ENCODE measurements at regions of chr9 and their contacts with region 1.

Region 1: GRCh38 chr9:129487642-129488409 is 133.1 kb downstream of the C9orf50 start:
- DNase-seq: peak; percentile 75
- H3K4me3 Mint-ChIP-seq: peak overlapping the region; percentile 93
- H3K27ac Mint-ChIP-seq: peak overlapping the region; percentile 100
- H3K4me1 Mint-ChIP-seq: peaks cover 62% of the 10 kb centered on the region
- H3K27me3 Mint-ChIP-seq: no peaks in the 10 kb centered on the region

Region 2: GRCh38 chr9:129237195-129237611 is 250.6 kb before region 1 on chr9:
- CTCF ChIA-PET with region 1: no interaction called
- intact Hi-C with region 1: loop called (anchors 5 kb)
- DNase-seq: peak; percentile 83
- H3K4me3 Mint-ChIP-seq: peak overlapping the region; percentile 82
- H3K27ac Mint-ChIP-seq: peak overlapping the region; percentile 95
- H3K4me1 Mint-ChIP-seq: peaks cover 53% of the 10 kb centered on the region
- H3K27me3 Mint-ChIP-seq: no peaks in the 10 kb centered on the region

Region 3: DNA sequence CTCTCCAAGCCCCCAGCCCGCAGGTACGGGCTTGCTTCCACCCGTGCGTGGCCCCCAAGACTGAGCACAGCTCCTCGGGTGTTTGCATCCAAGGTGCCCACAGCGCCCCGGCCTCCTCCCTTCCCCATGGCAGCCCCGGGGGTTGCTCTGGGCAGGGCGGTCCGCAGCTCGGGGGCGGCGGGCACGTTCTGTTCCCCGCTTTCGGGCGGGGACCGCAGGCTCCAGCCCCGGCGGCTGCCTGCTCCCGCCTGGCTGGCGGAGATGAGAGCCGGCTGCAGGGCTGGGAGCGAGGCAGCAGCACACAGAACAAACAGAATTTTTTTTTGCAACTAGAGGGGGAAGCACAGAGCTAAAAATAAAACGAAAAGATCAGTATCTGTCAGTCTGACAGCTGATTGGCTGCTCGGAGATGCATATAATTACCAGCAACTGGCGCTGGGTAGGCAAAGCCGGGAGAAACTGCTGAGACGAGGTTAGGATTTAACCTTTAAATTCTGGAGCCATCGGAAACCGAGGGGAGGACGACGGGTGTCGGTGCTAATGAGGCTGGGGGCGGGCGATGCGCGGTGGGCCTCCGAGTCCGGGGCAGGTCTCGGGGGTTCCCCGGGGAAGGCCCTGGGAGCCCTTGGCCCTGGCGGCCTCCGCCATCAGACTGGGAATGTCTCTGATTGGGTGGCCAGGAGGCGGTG is 167.1 kb before region 1 on chr9:
- CTCF ChIA-PET with region 1: no interaction called
- intact Hi-C with region 1: loop called (anchors 5 kb)
- DNase-seq: peak; percentile 77
- H3K4me3 Mint-ChIP-seq: peak overlapping the region; percentile 68
- H3K27ac Mint-ChIP-seq: peak overlapping the region; percentile 67
- H3K4me1 Mint-ChIP-seq: peaks cover 18% of the 10 kb centered on the region
- H3K27me3 Mint-ChIP-seq: no peaks in the 10 kb centered on the region

Region 4: DNA sequence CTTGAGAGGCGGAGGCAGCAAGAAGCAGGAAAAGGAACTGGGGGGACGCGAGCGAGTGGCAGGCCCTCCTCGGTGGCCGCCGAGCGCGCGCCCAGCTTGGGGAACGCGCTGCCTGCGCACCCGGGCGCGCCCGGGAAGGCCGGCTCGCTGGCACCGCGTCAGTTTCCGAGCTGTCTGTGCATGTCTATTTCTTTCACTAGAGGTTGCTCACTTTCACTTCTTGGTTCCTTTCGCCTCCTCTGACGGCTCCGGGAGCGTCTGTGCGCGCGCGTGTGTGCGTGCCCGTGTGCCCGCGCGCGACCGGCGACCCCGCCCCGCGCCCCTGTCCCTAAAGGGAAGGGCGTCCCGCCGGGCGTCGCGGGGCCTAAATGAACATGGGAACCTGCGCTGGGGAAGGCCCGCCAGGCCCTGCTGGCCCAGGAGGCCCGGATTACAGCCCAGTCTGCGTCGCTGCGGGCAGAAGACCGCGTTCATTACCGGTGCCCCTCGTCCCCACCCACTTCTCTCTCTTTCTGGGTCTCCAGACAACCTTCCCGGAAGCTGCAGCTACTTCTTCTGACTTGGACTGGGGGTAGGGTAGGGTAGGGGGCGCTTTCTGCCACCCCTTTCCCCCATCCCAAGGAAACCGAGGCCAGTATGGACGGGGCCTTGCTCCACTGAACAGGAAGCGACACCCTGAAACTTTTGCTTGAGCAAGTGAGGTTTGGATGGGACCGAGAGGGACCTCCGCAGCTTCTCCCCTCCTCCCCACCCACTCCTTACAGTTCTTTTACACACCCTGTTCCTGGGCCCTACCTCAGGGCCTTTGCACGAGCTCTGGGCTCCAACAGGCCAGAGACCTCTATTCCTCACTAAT is 104.0 kb before region 1 on chr9:
- CTCF ChIA-PET with region 1: no interaction called
- intact Hi-C with region 1: loop called (anchors 2 kb)
- DNase-seq: peak; percentile 80
- H3K4me3 Mint-ChIP-seq: peak overlapping the region; percentile 69
- H3K27ac Mint-ChIP-seq: peak overlapping the region; percentile 66
- H3K4me1 Mint-ChIP-seq: peaks cover 10% of the 10 kb centered on the region
- H3K27me3 Mint-ChIP-seq: no peaks in the 10 kb centered on the region

Region 5: DNA sequence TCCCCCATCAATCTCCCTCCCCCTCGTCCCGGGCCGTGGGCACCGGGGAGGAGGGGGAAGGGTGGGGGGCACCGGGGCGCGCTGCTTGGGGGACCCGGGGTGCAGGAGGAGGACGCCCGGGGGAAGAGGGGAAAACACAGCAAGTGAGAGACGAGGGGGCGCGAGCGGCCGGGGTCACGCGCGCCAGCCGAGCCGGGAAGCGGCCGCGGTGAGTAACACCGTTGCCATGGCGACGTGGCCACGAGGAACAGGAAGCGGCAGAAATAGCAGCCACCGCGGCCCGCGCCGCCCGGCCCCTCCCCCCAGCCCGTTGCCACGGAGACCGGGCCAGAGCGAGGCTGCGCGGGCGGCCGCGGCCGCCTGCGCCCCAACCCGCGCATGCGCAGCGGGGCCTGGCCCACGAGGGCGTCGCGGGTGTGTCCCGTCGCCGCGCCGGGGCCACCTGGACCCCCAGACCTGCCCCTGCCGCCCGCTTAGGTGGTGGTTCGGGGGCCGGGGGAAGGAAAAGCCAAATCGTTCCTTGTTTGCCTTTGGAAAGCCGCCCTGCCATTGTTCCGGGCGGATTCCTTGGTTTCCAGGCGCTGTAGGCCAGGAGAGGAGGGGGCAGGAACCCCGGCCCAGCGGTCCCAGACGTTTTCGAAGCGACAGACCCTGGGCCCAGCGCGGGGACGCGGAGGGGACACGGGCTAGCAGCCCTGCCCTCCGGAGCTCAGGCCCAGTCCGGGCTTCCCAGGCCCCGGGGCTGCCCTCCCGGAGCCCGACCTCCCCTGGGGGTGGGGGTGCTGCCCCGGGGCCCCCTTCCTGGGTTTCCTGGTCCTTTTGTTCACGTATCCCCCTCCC is 74.1 kb before region 1 on chr9:
- CTCF ChIA-PET with region 1: no interaction called
- intact Hi-C with region 1: loop called (anchors 1 kb)
- DNase-seq: peak; percentile 99
- H3K4me3 Mint-ChIP-seq: peak overlapping the region; percentile 82
- H3K27ac Mint-ChIP-seq: peak overlapping the region; percentile 93
- H3K4me1 Mint-ChIP-seq: peaks cover 14% of the 10 kb centered on the region
- H3K27me3 Mint-ChIP-seq: no peaks in the 10 kb centered on the region

Region 6: GRCh38 chr9:129460323-129461261 is 27.2 kb before region 1 on chr9:
- CTCF ChIA-PET with region 1: interaction called, 8 read pairs
- intact Hi-C with region 1: loop called (anchors 1 kb)
- DNase-seq: peak; percentile 97
- H3K4me3 Mint-ChIP-seq: peak overlapping the region; percentile 78
- H3K27ac Mint-ChIP-seq: peak overlapping the region; percentile 85
- H3K4me1 Mint-ChIP-seq: peaks cover 24% of the 10 kb centered on the region
- H3K27me3 Mint-ChIP-seq: no peaks in the 10 kb centered on the region

Region 7: GRCh38 chr9:129569502-129570449 is 82.0 kb after region 1 on chr9:
- CTCF ChIA-PET with region 1: no interaction called
- intact Hi-C with region 1: loop called (anchors 5 kb)
- DNase-seq: no peak
- H3K4me3 Mint-ChIP-seq: peak overlapping the region; percentile 64
- H3K27ac Mint-ChIP-seq: no peak overlapping the region
- H3K4me1 Mint-ChIP-seq: peaks cover 18% of the 10 kb centered on the region
- H3K27me3 Mint-ChIP-seq: peaks cover 19% of the 10 kb centered on the region